Endothelial cell of umbilical vein (primary cell): ENCODE measurements at regions of chr2 and their contacts with region 1.

Region 1: GRCh38 chr2:227890495-227891079 is 19.2 kb downstream of the DAW1 start:
- DNase-seq: peak; percentile 58
- H3K4me3 ChIP-seq: no peak overlapping the region
- H3K27ac ChIP-seq: no peak overlapping the region
- H3K4me1 ChIP-seq: no peaks in the 10 kb centered on the region
- H3K27me3 ChIP-seq: no peaks in the 10 kb centered on the region
- CTCF ChIP-seq: peak; percentile 30 to 34
- POLR2A ChIP-seq: no peak

Region 2: GRCh38 chr2:227655454-227655853 is 235.1 kb before region 1 on chr2:
- CTCF ChIA-PET with region 1: interaction called, 33 read pairs
- POLR2A ChIA-PET with region 1: no interaction called
- dilution Hi-C with region 1: no loop called
- intact Hi-C with region 1: no loop called
- DNase-seq: peak; percentile 44
- H3K4me3 ChIP-seq: no peak overlapping the region
- H3K27ac ChIP-seq: no peak overlapping the region
- H3K4me1 ChIP-seq: no peaks in the 10 kb centered on the region
- H3K27me3 ChIP-seq: peaks cover 0 to 4% of the 10 kb centered on the region in 2 experiments
- CTCF ChIP-seq: no peak
- POLR2A ChIP-seq: no peak

Region 3: GRCh38 chr2:227774011-227774624 is 116.5 kb before region 1 on chr2:
- CTCF ChIA-PET with region 1: interaction called, 10 read pairs
- POLR2A ChIA-PET with region 1: no interaction called
- dilution Hi-C with region 1: no loop called
- intact Hi-C with region 1: no loop called
- DNase-seq: peak; percentile 22
- H3K4me3 ChIP-seq: no peak overlapping the region
- H3K27ac ChIP-seq: no peak overlapping the region
- H3K4me1 ChIP-seq: no peaks in the 10 kb centered on the region
- H3K27me3 ChIP-seq: no peaks in the 10 kb centered on the region
- CTCF ChIP-seq: peak; percentile 25 to 31
- POLR2A ChIP-seq: no peak

Region 4: GRCh38 chr2:227871375-227871788 is 19.2 kb before region 1 on chr2 and contains the start of gene DAW1:
- CTCF ChIA-PET with region 1: interaction called, 34 read pairs
- POLR2A ChIA-PET with region 1: no interaction called
- dilution Hi-C with region 1: no loop called
- intact Hi-C with region 1: no loop called
- DNase-seq: peak; percentile 78
- H3K4me3 ChIP-seq: peak within 1 kb of the TSS; percentile 47 to 54 (median 52)
- H3K27ac ChIP-seq: peak within 1 kb of the TSS; percentile 99
- H3K4me1 ChIP-seq: peaks cover 33% of the 10 kb centered on the region
- H3K27me3 ChIP-seq: no peaks in the 10 kb centered on the region
- CTCF ChIP-seq: no peak
- POLR2A ChIP-seq: no peak
- total RNA-seq, gene DAW1: 2.0 and 3.2 TPM in 2 replicates

Region 5: DNA sequence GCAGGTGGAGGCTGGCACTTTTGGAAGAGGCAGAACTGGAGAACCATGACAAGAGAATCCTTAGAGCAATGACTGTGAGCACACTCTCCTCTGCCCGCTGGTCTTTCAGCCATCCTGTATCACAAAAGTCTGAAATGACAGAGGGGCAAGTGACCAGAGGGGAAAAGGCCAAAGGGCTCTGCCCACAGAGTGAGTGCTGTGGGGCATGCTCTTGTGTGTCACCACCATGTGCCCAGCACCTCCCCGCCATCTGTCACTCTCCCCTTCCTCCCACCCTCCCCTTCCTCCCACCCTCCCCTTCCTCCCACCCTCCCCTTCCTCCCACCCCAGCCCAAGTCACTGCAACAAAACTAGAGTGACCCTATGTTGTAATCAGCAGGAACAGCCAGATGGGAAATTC is 12.8 kb after region 1 on chr2:
- CTCF ChIA-PET with region 1: interaction called, 30 read pairs
- POLR2A ChIA-PET with region 1: no interaction called
- dilution Hi-C with region 1: no loop called
- intact Hi-C with region 1: no loop called
- DNase-seq: no peak
- H3K4me3 ChIP-seq: no peak overlapping the region
- H3K27ac ChIP-seq: no peak overlapping the region
- H3K4me1 ChIP-seq: no peaks in the 10 kb centered on the region
- H3K27me3 ChIP-seq: no peaks in the 10 kb centered on the region
- CTCF ChIP-seq: no peak
- POLR2A ChIP-seq: no peak

Region 6: DNA sequence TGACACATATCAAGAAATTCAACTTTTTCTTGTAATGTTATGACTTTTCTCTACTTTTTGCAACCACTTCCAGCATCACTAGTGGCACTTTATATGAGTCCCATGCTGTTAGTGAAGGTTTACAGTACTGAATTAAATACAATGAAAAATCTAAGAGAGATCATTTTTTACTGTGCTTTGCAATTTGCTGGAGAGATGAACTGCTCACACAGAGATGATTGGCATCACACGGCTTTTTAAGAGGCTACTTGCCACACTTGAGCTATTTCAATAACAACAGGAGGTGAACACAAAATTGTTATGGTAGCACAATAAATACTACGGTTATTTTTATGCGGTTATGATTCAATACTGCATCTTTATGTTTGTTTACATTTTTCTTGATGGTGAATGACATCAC is 69.7 kb after region 1 on chr2:
- CTCF ChIA-PET with region 1: no interaction called
- POLR2A ChIA-PET with region 1: no interaction called
- dilution Hi-C with region 1: no loop called
- intact Hi-C with region 1: no loop called
- DNase-seq: no peak
- H3K4me3 ChIP-seq: no peak overlapping the region
- H3K27ac ChIP-seq: no peak overlapping the region
- H3K4me1 ChIP-seq: no peaks in the 10 kb centered on the region
- H3K27me3 ChIP-seq: no peaks in the 10 kb centered on the region
- CTCF ChIP-seq: no peak
- POLR2A ChIP-seq: no peak

Region 7: DNA sequence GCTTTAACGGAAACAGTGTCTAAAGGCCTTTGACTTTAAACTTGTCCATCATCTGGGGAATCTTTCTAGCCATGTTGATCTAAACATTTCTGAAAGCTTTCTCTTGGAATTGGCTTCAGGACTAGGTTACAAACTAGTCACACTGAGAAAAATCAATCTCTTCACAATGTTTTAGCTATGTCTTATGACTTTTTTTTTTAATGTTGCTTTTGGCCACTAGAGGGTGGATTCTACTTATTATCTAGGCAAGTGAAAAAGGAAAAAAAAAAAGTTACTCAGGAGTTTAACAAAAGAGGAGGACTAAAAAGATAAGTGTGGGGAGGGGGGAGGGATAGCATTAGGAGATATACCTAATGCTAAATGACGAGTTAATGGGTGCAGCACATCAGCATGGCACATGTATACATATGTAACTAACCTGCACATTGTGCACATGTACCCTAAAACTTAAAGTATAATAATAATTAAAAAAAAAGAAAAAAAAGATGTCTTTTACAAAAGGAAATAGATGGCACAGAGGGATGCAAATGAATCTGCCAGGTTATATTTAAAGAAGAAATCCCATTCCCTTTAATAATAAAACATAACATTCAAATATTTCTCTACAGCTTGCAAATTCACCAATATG is 1540.9 kb after region 1 on chr2:
- CTCF ChIA-PET with region 1: interaction called, 11 read pairs
- POLR2A ChIA-PET with region 1: no interaction called
- dilution Hi-C with region 1: no loop called
- intact Hi-C with region 1: loop called (anchors 10 kb)
- DNase-seq: peak; percentile 54
- H3K4me3 ChIP-seq: no peak overlapping the region
- H3K27ac ChIP-seq: no peak overlapping the region
- H3K4me1 ChIP-seq: no peaks in the 10 kb centered on the region
- H3K27me3 ChIP-seq: no peaks in the 10 kb centered on the region
- CTCF ChIP-seq: peak; percentile 23 to 30
- POLR2A ChIP-seq: no peak

Region 8: GRCh38 chr2:229714736-229715541 is 1824.4 kb after region 1 on chr2:
- CTCF ChIA-PET with region 1: interaction called, 4 read pairs
- POLR2A ChIA-PET with region 1: no interaction called
- dilution Hi-C with region 1: no loop called
- intact Hi-C with region 1: loop called (anchors 2 kb)
- DNase-seq: peak; percentile 50
- H3K4me3 ChIP-seq: peak overlapping the region in 2 of 3 experiments; percentile 18 to 20
- H3K27ac ChIP-seq: no peak overlapping the region
- H3K4me1 ChIP-seq: peaks cover 6% of the 10 kb centered on the region
- H3K27me3 ChIP-seq: peaks cover 22 to 41% of the 10 kb centered on the region in 2 experiments
- CTCF ChIP-seq: no peak
- POLR2A ChIP-seq: no peak